Naive thymus-derived CD4-positive, alpha-beta T cell (primary cell): ENCODE measurements at regions of chr12 and their contacts with region 1.

Region 1: DNA sequence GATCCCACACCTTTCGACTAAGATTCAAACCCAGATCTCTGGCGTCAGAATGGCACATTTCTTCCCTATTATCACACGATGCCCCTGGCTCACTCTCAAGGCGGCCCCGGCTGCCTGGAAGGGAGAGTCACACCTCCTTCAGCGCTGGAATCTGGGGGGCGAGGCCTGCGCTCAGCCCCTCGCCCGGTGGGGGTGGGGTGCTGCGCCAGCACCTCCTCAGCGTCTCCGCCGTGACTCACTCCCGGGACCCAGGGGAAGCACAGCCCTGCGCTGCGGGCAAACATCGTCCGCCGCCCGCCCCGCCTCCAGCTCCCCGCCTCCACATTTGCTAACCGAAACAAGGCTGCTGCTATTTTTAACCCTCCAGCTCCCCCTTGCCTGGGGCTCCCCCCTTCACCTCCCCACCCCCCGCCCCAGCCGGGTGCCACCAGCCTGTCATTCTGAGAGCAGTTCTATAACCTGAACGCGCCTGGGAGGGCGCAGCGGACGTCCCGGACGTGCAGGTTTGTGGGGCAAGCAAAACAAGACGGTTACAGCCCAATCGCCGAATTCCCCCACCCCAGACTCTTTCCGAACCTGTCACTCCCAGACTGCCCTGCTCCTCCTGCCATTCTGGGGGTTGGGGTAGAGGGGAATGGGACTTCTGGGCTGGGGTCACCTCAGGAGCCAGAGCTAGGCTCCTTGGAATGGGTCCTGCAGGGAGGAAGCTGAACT is 6.7 kb downstream of the HDAC7 start:
- DNase-seq: peak; percentile 61 to 95 (median 85)
- ATAC-seq: peak; percentile 84
- H3K4me3 ChIP-seq: peak overlapping the region; percentile 80
- H3K4me3 Mint-ChIP-seq: peak overlapping the region; percentile 83 to 96 (median 88)
- H3K27ac ChIP-seq: peak overlapping the region; percentile 88
- H3K27ac Mint-ChIP-seq: peak overlapping the region; percentile 92 to 99 (median 97)
- H3K4me1 ChIP-seq: peaks cover 85 to 87% of the 10 kb centered on the region in 2 donors
- H3K4me1 Mint-ChIP-seq: peaks cover 77 to 100% (median 90%) of the 10 kb centered on the region in 7 donors
- H3K27me3 ChIP-seq: no peaks in the 10 kb centered on the region
- H3K27me3 Mint-ChIP-seq: no peaks in the 10 kb centered on the region

Region 2: GRCh38 chr12:46209914-46210872 is 1602.8 kb before region 1 on chr12:
- CTCF ChIA-PET with region 1: no interaction called
- POLR2A ChIA-PET with region 1: no interaction called
- intact Hi-C with region 1: loop called (anchors 5 to 10 kb)
- DNase-seq: peak in 8 of 9 donors; percentile 47 to 81 (median 68)
- ATAC-seq: peak; percentile 66
- H3K4me3 ChIP-seq: no peak overlapping the region
- H3K4me3 Mint-ChIP-seq: peak overlapping the region; percentile 47 to 76 (median 69)
- H3K27ac ChIP-seq: peak overlapping the region; percentile 78
- H3K27ac Mint-ChIP-seq: peak overlapping the region; percentile 89 to 100 (median 98)
- H3K4me1 ChIP-seq: peaks cover 65 to 72% of the 10 kb centered on the region in 2 donors
- H3K4me1 Mint-ChIP-seq: peaks cover 45 to 98% (median 96%) of the 10 kb centered on the region in 7 donors
- H3K27me3 ChIP-seq: no peaks in the 10 kb centered on the region
- H3K27me3 Mint-ChIP-seq: no peaks in the 10 kb centered on the region

Region 3: DNA sequence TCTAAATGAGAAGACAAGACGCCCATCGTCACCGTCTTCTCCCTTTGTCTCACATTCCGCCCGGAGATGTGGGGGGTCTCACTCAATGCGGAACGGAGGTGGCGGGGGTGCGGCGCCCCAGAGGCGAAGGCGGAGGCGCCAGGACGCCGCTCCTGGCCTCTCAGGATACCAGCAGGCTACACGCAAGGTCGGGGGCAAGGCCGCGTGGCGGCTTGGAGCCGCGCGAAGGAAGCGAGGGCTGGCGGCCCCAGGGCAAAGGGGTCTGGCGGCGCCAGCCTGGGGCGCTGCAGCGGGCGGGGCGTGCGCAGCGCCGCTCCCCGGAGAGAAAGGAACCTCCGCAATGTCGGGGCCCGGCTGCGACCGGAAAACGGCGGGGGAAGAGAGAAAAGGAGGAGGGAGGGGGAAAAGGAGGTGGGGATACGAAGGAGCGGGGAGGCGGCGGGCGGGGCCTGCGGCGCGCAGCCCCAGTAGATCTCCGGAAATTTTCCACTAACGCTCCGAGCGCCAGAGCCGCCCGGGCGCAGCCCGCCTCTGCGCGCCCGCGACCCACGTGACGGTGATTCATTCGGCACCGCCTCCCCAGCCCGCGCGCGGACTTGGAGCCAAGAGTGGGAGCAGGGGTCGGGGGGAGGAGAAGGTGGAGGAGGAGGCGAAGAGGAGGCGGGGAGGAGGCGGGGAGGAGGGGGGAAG is 1429.8 kb before region 1 on chr12:
- CTCF ChIA-PET with region 1: no interaction called
- POLR2A ChIA-PET with region 1: no interaction called
- intact Hi-C with region 1: loop called in 1 of 2 experiments (anchors 5 kb)
- DNase-seq: peak; percentile 76 to 96 (median 90)
- ATAC-seq: peak; percentile 89
- H3K4me3 ChIP-seq: peak overlapping the region; percentile 61
- H3K4me3 Mint-ChIP-seq: peak overlapping the region; percentile 82 to 95 (median 91)
- H3K27ac ChIP-seq: peak overlapping the region; percentile 94
- H3K27ac Mint-ChIP-seq: peak overlapping the region; percentile 90 to 98 (median 97)
- H3K4me1 ChIP-seq: peaks cover 5 to 25% of the 10 kb centered on the region in 2 donors
- H3K4me1 Mint-ChIP-seq: peaks cover 24 to 53% (median 47%) of the 10 kb centered on the region in 7 donors
- H3K27me3 ChIP-seq: no peaks in the 10 kb centered on the region
- H3K27me3 Mint-ChIP-seq: no peaks in the 10 kb centered on the region

Region 4: GRCh38 chr12:47328831-47329545 is 484.0 kb before region 1 on chr12:
- CTCF ChIA-PET with region 1: no interaction called
- POLR2A ChIA-PET with region 1: no interaction called
- intact Hi-C with region 1: no loop called
- DNase-seq: peak in 1 of 9 donors; percentile 10
- ATAC-seq: no peak
- H3K4me3 ChIP-seq: no peak overlapping the region
- H3K4me3 Mint-ChIP-seq: peak overlapping the region in 3 of 10 donors; percentile 44 to 57 (median 47)
- H3K27ac ChIP-seq: no peak overlapping the region
- H3K27ac Mint-ChIP-seq: peak overlapping the region in 8 of 9 donors; percentile 3 to 74 (median 14)
- H3K4me1 ChIP-seq: peaks cover 5 to 14% of the 10 kb centered on the region in 2 donors
- H3K4me1 Mint-ChIP-seq: peaks cover 15 to 33% (median 27%) of the 10 kb centered on the region in 7 donors
- H3K27me3 ChIP-seq: no peaks in the 10 kb centered on the region
- H3K27me3 Mint-ChIP-seq: no peaks in the 10 kb centered on the region

Region 5: DNA sequence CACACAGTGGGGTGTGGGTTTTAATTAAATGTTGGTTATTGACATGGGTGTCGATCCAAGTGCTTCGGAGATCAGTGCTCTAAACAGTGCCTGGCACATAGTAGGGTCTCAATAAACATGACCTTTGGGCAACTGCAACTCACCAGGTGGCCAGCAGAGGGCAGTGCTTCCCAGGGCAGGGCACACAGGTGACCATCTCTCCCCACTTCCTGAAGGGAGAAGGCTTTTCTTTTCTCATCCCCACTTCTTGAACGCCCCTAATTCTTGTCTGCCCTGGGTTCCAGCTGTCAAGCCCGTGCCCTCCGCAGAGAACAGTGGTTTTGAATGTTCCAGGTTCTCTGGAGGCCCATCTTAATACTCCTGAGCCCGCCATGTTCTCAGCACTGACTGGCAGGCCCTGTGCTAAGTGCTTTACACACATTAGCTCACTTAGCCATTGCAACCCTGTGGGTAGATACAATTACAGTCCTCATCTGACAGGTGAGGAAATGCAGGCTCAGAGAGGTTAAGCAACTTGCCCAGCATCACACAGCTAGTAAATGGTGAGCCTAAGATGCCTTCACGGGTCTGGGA is 70.6 kb before region 1 on chr12:
- CTCF ChIA-PET with region 1: interaction called, 16 read pairs
- POLR2A ChIA-PET with region 1: interaction called, 4 read pairs
- intact Hi-C with region 1: loop called in 1 of 2 experiments (anchors 2 kb)
- DNase-seq: peak; percentile 41 to 84 (median 58)
- ATAC-seq: peak; percentile 65
- H3K4me3 ChIP-seq: no peak overlapping the region
- H3K4me3 Mint-ChIP-seq: peak overlapping the region in 2 of 10 donors; percentile 18 to 35
- H3K27ac ChIP-seq: no peak overlapping the region
- H3K27ac Mint-ChIP-seq: peak overlapping the region in 1 of 9 donors; percentile 44
- H3K4me1 ChIP-seq: peaks cover 13 to 14% of the 10 kb centered on the region in 2 donors
- H3K4me1 Mint-ChIP-seq: peaks cover 10 to 44% (median 29%) of the 10 kb centered on the region in 7 donors
- H3K27me3 ChIP-seq: no peaks in the 10 kb centered on the region
- H3K27me3 Mint-ChIP-seq: peaks cover 0 to 17% (median 0%) of the 10 kb centered on the region in 5 donors

Region 6: GRCh38 chr12:47797441-47797840 is 15.5 kb before region 1 on chr12:
- CTCF ChIA-PET with region 1: interaction called, 10 read pairs
- POLR2A ChIA-PET with region 1: interaction called, 40 read pairs
- intact Hi-C with region 1: loop called (anchors 1 to 2 kb)
- DNase-seq: peak in 6 of 9 donors; percentile 36 to 54 (median 46)
- ATAC-seq: peak; percentile 74
- H3K4me3 ChIP-seq: no peak overlapping the region
- H3K4me3 Mint-ChIP-seq: peak overlapping the region in 3 of 10 donors; percentile 53 to 64 (median 61)
- H3K27ac ChIP-seq: peak overlapping the region; percentile 51
- H3K27ac Mint-ChIP-seq: peak overlapping the region; percentile 57 to 93 (median 87)
- H3K4me1 ChIP-seq: peaks cover 6 to 35% of the 10 kb centered on the region in 2 donors
- H3K4me1 Mint-ChIP-seq: peaks cover 20 to 47% (median 42%) of the 10 kb centered on the region in 7 donors
- H3K27me3 ChIP-seq: no peaks in the 10 kb centered on the region
- H3K27me3 Mint-ChIP-seq: no peaks in the 10 kb centered on the region

Region 7: DNA sequence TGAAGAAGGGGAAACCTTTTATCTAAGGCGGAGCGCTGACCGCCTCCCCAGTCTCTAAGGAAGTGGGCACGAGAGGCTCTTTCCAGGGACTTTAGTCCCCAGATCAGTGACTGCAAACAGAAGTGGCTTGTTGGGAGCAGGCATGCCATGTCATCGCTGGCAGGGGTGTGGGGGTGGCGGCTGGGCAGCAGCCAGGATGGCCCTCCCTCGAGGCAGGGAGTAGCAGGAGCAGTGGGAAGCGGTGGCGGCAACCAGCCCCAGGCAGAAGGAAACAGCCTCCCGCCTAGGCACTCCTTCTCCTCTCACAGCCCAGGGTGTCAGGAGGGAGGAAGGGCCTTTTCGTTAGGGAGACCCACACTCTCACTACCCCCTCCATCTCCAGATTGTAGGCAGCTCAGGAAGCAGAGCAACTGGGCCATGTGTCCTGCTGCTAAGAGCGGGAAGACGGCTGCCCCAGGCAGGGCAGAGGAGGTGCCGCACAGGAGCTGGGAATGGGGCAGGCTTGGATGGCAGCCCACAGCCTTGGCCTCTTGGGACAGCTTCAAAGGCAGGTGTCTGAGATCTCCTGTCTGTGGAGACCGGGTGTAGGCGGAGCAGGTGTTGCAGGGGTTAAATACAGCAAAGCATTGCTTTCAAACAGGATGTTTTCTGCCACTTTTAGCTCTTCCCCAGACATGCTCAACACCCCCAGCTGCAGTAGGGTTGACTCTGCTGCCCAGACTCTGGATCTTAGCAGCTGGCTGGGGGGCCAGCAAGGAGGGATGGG is 70.0 kb after region 1 on chr12:
- CTCF ChIA-PET with region 1: no interaction called
- POLR2A ChIA-PET with region 1: no interaction called
- intact Hi-C with region 1: loop called in 1 of 2 experiments (anchors 2 kb)
- DNase-seq: peak in 7 of 9 donors; percentile 30 to 60 (median 55)
- ATAC-seq: peak; percentile 71
- H3K4me3 ChIP-seq: peak overlapping the region; percentile 73
- H3K4me3 Mint-ChIP-seq: peak overlapping the region; percentile 84 to 95 (median 90)
- H3K27ac ChIP-seq: peak overlapping the region; percentile 50
- H3K27ac Mint-ChIP-seq: peak overlapping the region; percentile 72 to 99 (median 95)
- H3K4me1 ChIP-seq: peaks cover 14 to 38% of the 10 kb centered on the region in 2 donors
- H3K4me1 Mint-ChIP-seq: peaks cover 33 to 82% (median 54%) of the 10 kb centered on the region in 7 donors
- H3K27me3 ChIP-seq: no peaks in the 10 kb centered on the region
- H3K27me3 Mint-ChIP-seq: no peaks in the 10 kb centered on the region

Region 8: GRCh38 chr12:48183091-48183875 is 370.3 kb after region 1 on chr12 and contains the start of gene CCDC184:
- CTCF ChIA-PET with region 1: no interaction called
- POLR2A ChIA-PET with region 1: no interaction called
- intact Hi-C with region 1: loop called in 1 of 2 experiments (anchors 2 kb)
- DNase-seq: peak; percentile 58 to 85 (median 83)
- ATAC-seq: peak; percentile 84
- H3K4me3 ChIP-seq: peak within 1 kb of the TSS; percentile 80
- H3K4me3 Mint-ChIP-seq: peak within 1 kb of the TSS; percentile 91 to 98 (median 96)
- H3K27ac ChIP-seq: peak within 1 kb of the TSS; percentile 59
- H3K27ac Mint-ChIP-seq: peak within 1 kb of the TSS; percentile 60 to 95 (median 86)
- H3K4me1 ChIP-seq: peaks cover 6 to 11% of the 10 kb centered on the region in 2 donors
- H3K4me1 Mint-ChIP-seq: peaks cover 5 to 28% (median 8%) of the 10 kb centered on the region in 7 donors
- H3K27me3 ChIP-seq: peaks cover 0 to 4% of the 10 kb centered on the region in 2 donors
- H3K27me3 Mint-ChIP-seq: peaks cover 21 to 81% (median 38%) of the 10 kb centered on the region in 5 donors
- total RNA-seq, gene CCDC184: 0.22 to 3.8 (median 1.8) TPM in 4 of 5 experiments, not detected in the other